ENCODE measurements at regions of chrX and their contacts with region 1.

Region 1: GRCh38 chrX:71652405-71652804 is 14.9 kb upstream of the LOC101059915 start:
- DNase-seq: peak in 7 of 9 donors; percentile 19 to 59 (median 48)
- ATAC-seq: peak; percentile 75
- H3K4me3 ChIP-seq: no peak overlapping the region
- H3K4me3 Mint-ChIP-seq: no peak overlapping the region
- H3K27ac ChIP-seq: no peak overlapping the region
- H3K27ac Mint-ChIP-seq: peak overlapping the region in 1 of 9 donors; percentile 25
- H3K4me1 ChIP-seq: peaks cover 0 to 5% of the 10 kb centered on the region in 2 donors
- H3K4me1 Mint-ChIP-seq: peaks cover 0 to 26% (median 0%) of the 10 kb centered on the region in 7 donors
- H3K27me3 ChIP-seq: no peaks in the 10 kb centered on the region
- H3K27me3 Mint-ChIP-seq: peaks cover 0 to 12% (median 0%) of the 10 kb centered on the region in 5 donors

Region 2: DNA sequence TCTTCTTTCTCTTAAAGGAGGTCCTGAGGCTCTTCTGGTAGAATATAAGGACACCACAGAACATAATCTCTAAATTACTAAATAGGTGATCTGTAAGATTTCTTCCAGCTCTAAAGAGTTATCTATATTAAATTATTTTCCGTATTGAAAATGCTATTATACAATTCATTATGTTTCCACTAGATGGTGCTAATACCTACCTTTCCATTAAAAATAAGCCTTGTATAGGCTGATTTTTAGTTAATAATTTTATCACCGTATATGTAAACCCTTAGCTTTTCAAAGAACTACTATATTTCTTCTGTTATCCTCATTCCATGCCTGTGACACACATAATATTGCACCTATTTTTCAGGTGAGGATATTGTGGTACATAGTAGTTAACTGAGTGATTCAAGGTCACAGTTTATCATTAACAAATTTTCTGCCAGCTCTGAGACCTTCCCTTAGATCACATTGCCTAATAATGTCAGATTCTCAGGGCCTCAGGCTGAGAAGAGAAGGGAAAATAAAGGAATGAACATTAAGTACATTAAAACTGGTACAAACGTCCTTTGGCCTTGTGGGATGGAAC is 882.7 kb before region 1 on chrX:
- CTCF ChIA-PET with region 1: no interaction called
- POLR2A ChIA-PET with region 1: no interaction called
- intact Hi-C with region 1: loop called in 1 of 2 experiments (anchors 5 kb)
- DNase-seq: peak in 1 of 9 donors; percentile 0
- ATAC-seq: no peak
- H3K4me3 ChIP-seq: no peak overlapping the region
- H3K4me3 Mint-ChIP-seq: no peak overlapping the region
- H3K27ac ChIP-seq: no peak overlapping the region
- H3K27ac Mint-ChIP-seq: no peak overlapping the region
- H3K4me1 ChIP-seq: no peaks in the 10 kb centered on the region
- H3K4me1 Mint-ChIP-seq: no peaks in the 10 kb centered on the region
- H3K27me3 ChIP-seq: no peaks in the 10 kb centered on the region
- H3K27me3 Mint-ChIP-seq: peaks cover 0 to 6% (median 0%) of the 10 kb centered on the region in 5 donors

Region 3: DNA sequence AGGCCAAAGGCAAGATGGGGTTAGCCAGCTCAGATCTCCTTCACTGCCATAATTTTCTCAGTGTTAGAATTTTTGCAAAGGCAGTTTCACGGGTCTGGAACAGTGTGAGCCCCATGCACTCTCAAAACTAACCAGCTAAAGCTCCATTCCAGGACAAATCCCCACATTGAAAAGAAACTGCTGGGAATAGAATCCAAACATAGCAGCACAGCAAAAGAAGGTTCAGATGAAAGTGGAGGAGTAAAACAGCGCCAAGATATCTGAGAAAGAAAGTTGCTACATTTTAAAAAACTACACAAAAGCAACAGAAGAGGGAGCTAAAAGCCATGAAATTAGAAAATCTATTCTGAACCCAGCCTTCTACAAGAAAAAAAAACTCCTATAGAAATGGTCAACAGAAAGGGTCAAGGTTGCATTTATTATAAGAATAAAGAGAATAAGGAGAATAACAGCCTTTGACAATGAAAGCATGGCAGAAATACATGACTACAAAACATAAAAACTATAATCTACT is 681.9 kb before region 1 on chrX:
- CTCF ChIA-PET with region 1: no interaction called
- POLR2A ChIA-PET with region 1: no interaction called
- intact Hi-C with region 1: loop called in 1 of 2 experiments (anchors 1 kb)
- DNase-seq: peak in 5 of 9 donors; percentile 1 to 26 (median 6)
- ATAC-seq: no peak
- H3K4me3 ChIP-seq: no peak overlapping the region
- H3K4me3 Mint-ChIP-seq: peak overlapping the region in 7 of 10 donors; percentile 2 to 57 (median 25)
- H3K27ac ChIP-seq: no peak overlapping the region
- H3K27ac Mint-ChIP-seq: no peak overlapping the region
- H3K4me1 ChIP-seq: no peaks in the 10 kb centered on the region
- H3K4me1 Mint-ChIP-seq: peaks cover 0 to 8% (median 3%) of the 10 kb centered on the region in 7 donors
- H3K27me3 ChIP-seq: no peaks in the 10 kb centered on the region
- H3K27me3 Mint-ChIP-seq: peaks cover 0 to 3% (median 0%) of the 10 kb centered on the region in 5 donors

Region 4: DNA sequence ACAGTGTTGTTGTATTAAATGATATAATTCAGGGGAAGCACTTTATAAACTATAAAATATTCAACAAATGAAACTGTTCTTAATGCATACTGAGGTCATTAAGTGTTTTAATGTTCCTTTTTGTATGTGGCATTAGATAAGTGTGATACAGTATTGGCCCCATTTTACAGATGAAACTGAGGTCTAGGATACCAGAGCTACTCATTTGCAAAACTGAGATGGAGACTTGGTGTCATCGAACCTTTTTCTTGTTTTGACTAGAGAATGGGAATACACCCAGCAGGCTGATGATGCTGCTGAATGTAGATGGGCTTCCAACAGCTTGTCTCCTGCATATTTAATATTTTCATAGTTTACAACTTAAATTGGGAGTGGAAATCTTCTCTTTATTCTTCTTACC is 251.7 kb before region 1 on chrX:
- CTCF ChIA-PET with region 1: no interaction called
- POLR2A ChIA-PET with region 1: interaction called, 3 read pairs
- intact Hi-C with region 1: loop called in 1 of 2 experiments (anchors 5 kb)
- DNase-seq: no peak
- ATAC-seq: no peak
- H3K4me3 ChIP-seq: no peak overlapping the region
- H3K4me3 Mint-ChIP-seq: no peak overlapping the region
- H3K27ac ChIP-seq: no peak overlapping the region
- H3K27ac Mint-ChIP-seq: peak overlapping the region in 1 of 9 donors; percentile 62
- H3K4me1 ChIP-seq: no peaks in the 10 kb centered on the region
- H3K4me1 Mint-ChIP-seq: peaks cover 0 to 10% (median 3%) of the 10 kb centered on the region in 7 donors
- H3K27me3 ChIP-seq: no peaks in the 10 kb centered on the region
- H3K27me3 Mint-ChIP-seq: no peaks in the 10 kb centered on the region

Region 5: DNA sequence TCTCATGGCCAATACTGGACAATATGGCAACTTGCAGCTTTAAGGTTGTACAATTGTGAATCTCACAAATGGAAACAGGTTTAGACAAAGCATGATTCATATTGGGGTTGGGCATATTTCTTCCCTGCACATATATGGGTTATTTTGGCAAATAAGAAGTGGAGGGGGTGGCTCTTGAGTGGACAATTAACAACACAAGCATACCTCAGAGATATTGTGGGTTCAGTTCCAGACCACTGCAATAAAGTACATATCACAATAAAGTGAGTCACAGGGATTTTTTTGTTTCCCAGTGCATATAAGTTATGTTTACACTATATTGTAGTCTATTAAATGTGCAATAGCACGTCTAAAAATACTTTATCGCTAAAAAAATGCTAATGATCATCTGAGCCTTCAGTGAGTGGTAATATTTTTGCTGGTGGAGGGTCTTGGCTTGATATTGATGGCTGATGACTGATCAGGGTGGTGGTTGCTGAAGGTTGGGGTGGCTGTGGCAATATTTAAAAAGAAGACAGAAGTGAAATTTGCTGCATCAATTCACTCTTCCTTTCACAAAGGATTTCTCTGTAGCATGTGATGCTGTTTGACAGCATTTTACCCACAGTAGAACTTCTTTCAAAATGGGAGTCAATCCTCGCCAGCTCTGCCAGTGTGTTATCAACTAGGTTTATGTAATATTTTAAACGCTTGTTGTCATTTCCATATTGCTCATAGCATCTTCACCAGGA is 170.0 kb before region 1 on chrX:
- CTCF ChIA-PET with region 1: no interaction called
- POLR2A ChIA-PET with region 1: no interaction called
- intact Hi-C with region 1: no loop called
- DNase-seq: no peak
- ATAC-seq: no peak
- H3K4me3 ChIP-seq: no peak overlapping the region
- H3K4me3 Mint-ChIP-seq: no peak overlapping the region
- H3K27ac ChIP-seq: no peak overlapping the region
- H3K27ac Mint-ChIP-seq: peak overlapping the region in 1 of 9 donors; percentile 59
- H3K4me1 ChIP-seq: no peaks in the 10 kb centered on the region
- H3K4me1 Mint-ChIP-seq: peaks cover 0 to 4% (median 0%) of the 10 kb centered on the region in 7 donors
- H3K27me3 ChIP-seq: no peaks in the 10 kb centered on the region
- H3K27me3 Mint-ChIP-seq: no peaks in the 10 kb centered on the region

Region 6: DNA sequence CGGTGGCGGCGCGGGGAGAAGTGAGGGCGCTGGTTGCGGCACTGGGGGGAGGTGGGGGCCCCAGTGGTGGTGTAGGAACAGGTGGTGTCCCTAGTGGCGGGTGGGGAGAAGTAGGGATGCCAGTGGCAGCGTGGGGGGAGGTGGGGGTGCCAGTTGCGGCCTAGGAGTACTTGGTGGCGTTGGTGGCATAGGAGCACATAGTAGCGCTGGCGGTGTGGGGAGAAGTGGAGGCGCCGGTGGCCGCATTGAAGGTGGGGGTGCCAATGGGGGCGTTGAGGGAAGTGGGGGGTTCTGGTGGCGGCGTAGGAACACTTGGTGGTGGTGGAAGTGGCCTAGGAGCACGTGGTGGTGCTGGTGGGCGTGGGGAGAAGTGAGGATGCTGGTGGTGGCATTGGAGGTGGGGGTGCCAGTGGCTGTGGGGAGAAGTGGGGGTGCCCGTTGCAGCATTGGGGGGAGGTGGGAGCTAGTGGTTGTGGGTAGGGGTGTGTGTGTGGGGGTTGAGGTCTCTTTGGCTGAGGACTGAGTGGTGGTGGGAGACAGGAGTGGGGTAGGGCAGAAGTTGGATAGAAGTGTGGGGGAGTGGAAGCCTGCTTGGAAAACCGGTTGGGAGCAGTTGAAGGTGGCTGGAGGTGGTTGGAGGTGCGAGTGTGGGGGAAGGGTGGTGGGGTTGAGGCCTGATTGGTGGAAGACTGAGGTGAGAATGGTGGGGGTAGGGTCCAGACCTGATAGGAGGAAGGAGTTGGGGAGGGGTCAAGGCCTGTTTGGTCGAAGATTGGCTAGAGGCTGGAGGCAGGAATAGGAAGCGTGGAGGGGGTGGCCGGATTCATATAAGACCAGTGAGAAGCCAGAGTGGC is 73.0 kb before region 1 on chrX:
- CTCF ChIA-PET with region 1: no interaction called
- POLR2A ChIA-PET with region 1: no interaction called
- intact Hi-C with region 1: loop called (anchors 5 kb)
- DNase-seq: no peak
- ATAC-seq: no peak
- H3K4me3 ChIP-seq: no peak overlapping the region
- H3K4me3 Mint-ChIP-seq: no peak overlapping the region
- H3K27ac ChIP-seq: no peak overlapping the region
- H3K27ac Mint-ChIP-seq: no peak overlapping the region
- H3K4me1 ChIP-seq: no peaks in the 10 kb centered on the region
- H3K4me1 Mint-ChIP-seq: peaks cover 0 to 6% (median 0%) of the 10 kb centered on the region in 7 donors
- H3K27me3 ChIP-seq: no peaks in the 10 kb centered on the region
- H3K27me3 Mint-ChIP-seq: no peaks in the 10 kb centered on the region

Region 7: DNA sequence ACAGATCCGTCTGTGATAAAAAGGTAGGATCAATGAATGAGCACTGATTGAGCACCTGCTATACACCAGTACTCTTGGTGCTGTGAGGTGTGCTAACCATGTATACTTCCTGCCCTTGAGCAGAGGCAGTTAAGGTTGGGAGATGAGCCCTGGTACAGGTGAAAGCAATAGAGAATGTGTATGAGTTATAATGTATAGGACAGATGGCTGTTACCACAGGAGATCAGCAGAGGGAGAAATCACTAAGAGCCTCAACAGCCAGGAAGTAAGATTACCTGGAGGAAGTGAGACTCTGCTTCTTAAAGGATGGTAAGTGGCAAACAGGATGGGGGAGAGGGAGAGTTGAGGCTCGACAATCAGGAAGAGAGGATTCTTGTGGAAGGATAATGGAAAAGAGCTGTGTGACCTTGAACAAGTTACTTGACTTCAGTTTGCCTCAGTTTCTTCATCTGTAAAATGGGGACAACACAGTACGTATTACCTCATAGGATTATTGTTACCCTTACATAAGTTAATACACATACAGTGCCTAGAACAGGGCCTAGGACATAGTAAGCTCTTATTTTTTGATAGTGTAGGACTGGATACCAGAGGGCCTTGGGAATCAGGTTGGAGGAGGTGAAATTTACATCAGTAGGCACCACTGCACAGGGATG is 43.2 kb before region 1 on chrX:
- CTCF ChIA-PET with region 1: interaction called, 6 read pairs
- POLR2A ChIA-PET with region 1: no interaction called
- intact Hi-C with region 1: loop called (anchors 1 kb)
- DNase-seq: peak in 4 of 9 donors; percentile 12 to 29 (median 18)
- ATAC-seq: peak; percentile 37
- H3K4me3 ChIP-seq: no peak overlapping the region
- H3K4me3 Mint-ChIP-seq: peak overlapping the region in 3 of 10 donors; percentile 1 to 37 (median 16)
- H3K27ac ChIP-seq: no peak overlapping the region
- H3K27ac Mint-ChIP-seq: peak overlapping the region; percentile 6 to 91 (median 74)
- H3K4me1 ChIP-seq: peaks cover 32 to 42% of the 10 kb centered on the region in 2 donors
- H3K4me1 Mint-ChIP-seq: peaks cover 13 to 66% (median 44%) of the 10 kb centered on the region in 7 donors
- H3K27me3 ChIP-seq: no peaks in the 10 kb centered on the region
- H3K27me3 Mint-ChIP-seq: no peaks in the 10 kb centered on the region

Region 8: DNA sequence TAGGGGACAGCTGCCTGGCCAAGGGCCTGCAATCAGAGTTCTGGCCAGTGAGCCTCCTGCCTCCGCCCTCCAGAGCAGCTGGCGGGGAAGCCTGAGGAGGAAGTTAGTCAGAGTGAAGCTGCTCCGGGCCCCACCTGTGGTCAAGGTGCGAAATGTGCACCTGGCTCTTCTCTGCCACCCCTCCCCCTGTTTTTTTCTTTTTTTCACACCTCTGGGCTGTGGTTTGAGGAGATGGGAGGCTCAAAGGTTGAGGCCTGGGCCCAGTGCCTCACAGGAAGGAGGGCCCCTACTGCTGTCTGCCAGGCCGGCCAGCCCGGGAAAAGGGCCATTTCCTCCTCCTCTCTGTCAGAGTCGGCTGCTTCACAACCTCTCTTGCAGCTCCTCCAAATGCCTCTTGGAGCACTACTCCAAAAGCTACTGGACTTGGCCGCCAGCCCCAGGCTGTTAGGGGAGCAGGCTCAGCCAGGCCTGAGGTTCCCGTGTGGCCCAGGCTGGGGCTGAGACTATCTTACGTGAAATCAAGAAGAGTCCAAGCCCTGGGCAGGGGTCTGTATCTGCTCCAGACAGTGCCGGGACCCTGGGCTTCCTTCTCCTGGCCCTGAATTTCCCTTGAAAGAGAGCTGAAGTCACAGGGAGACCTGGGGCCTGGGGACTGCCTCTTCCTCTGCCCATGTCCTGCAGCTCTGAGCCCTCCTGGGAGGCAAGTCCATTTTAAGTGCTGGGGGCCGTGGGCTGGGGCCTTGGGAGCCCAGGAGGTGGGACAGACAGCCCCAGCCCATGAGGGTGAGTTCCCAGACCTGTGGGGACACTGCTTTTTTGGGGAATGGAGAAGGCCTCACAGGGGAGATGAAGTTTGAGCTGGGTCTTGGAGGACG is 29.6 kb before region 1 on chrX:
- CTCF ChIA-PET with region 1: interaction called, 5 read pairs
- POLR2A ChIA-PET with region 1: no interaction called
- intact Hi-C with region 1: loop called (anchors 2 kb)
- DNase-seq: peak in 7 of 9 donors; percentile 12 to 61 (median 25)
- ATAC-seq: peak; percentile 75
- H3K4me3 ChIP-seq: peak overlapping the region; percentile 24
- H3K4me3 Mint-ChIP-seq: peak overlapping the region in 9 of 10 donors; percentile 5 to 74 (median 47)
- H3K27ac ChIP-seq: no peak overlapping the region
- H3K27ac Mint-ChIP-seq: peak overlapping the region; percentile 71 to 92 (median 80)
- H3K4me1 ChIP-seq: peaks cover 41 to 46% of the 10 kb centered on the region in 2 donors
- H3K4me1 Mint-ChIP-seq: peaks cover 25 to 68% (median 53%) of the 10 kb centered on the region in 7 donors
- H3K27me3 ChIP-seq: no peaks in the 10 kb centered on the region
- H3K27me3 Mint-ChIP-seq: no peaks in the 10 kb centered on the region

Region 9: DNA sequence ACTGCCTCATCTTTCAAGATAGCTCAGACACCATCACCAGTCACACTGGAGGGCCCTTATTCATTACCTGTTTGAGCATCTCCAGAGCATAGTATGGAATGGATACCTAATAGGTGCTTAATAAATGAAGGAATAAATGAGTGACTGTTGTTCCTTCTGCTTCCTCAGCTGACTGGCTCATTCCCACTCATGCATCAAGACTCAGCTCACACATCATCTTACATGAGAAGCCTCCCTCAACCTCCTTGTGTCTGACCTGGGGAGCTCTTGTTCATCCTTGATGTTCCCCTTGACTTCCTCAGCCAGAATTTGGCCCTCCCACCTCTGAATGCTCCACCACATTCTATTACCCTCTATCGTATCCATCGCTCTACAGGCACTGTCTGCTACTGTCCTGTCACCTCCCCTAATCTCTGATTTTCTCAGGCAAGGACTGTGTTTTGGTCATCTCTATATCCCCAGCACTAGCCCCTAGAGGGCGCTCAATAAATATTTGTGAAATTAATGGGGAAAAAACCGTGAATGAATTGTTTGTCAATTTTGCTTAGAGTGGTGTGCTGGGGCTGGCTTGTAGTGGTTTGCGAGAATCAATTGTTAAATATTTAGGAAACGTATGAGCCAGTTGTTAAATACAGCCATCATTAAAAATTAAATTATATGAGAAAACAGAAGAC is 346.6 kb after region 1 on chrX:
- CTCF ChIA-PET with region 1: no interaction called
- POLR2A ChIA-PET with region 1: no interaction called
- intact Hi-C with region 1: no loop called
- DNase-seq: peak in 4 of 9 donors; percentile 20 to 39 (median 24)
- ATAC-seq: peak; percentile 63
- H3K4me3 ChIP-seq: no peak overlapping the region
- H3K4me3 Mint-ChIP-seq: no peak overlapping the region
- H3K27ac ChIP-seq: no peak overlapping the region
- H3K27ac Mint-ChIP-seq: no peak overlapping the region
- H3K4me1 ChIP-seq: peaks cover 0 to 2% of the 10 kb centered on the region in 2 donors
- H3K4me1 Mint-ChIP-seq: peaks cover 0 to 10% (median 0%) of the 10 kb centered on the region in 7 donors
- H3K27me3 ChIP-seq: no peaks in the 10 kb centered on the region
- H3K27me3 Mint-ChIP-seq: peaks cover 0 to 26% (median 0%) of the 10 kb centered on the region in 5 donors

Measured in naive thymus-derived CD4-positive, alpha-beta T cell (primary cell).